GM12878 (cell line): ENCODE measurements at regions of chr2 and their contacts with region 1.

Region 1: DNA sequence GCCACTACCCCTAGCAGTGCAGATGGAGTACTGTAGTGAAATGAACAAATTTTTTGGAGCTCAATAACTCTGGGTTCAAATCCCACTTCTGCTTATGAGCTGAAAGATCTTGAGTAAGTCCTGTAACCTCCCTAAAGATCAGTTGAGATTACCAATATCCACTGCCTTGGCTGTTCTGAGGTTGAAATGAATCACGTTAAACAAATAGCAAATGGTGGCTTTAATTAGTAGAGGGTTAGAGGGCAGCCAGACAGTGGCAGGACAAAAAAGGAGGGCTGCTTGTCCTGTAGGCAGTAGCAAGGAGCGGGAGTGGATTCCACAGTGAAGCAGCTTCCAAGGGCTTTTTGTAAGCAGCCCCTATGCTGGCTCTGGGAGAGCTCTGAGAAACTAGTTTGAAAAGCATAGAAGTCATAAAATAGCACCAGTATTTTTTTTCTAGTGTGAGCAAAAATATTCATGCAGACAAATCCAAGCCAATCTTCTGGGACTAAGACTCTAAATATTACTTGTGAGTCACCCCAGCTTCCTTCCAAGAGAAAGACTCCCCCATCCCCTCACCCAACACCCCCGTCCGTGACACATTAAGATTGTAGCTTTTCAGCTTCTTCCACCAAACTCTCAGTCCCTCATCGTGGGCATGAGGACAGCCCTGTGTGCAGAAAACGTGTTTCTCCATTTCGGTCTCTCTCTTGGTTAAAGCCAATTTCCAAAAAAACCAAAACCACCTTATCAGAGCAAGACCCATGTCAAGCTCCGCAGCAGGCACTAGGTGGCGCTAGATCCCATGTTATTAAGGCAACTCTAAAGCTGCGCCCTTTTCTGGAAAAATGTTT is 123.5 kb upstream of the LGALSL start:
- DNase-seq: no peak
- ATAC-seq: peak; percentile 22
- H3K4me3 ChIP-seq: no peak overlapping the region
- H3K27ac ChIP-seq: no peak overlapping the region
- H3K4me1 ChIP-seq: peaks cover 41% of the 10 kb centered on the region
- H3K27me3 ChIP-seq: no peaks in the 10 kb centered on the region
- CTCF ChIP-seq: peak; percentile 82 to 92 (median 91)
- EP300 ChIP-seq: no peak
- POLR2A ChIP-seq: no peak
- RAD21 ChIP-seq: peak; percentile 97

Region 2: GRCh38 chr2:64062829-64063228 is 267.7 kb before region 1 on chr2:
- CTCF ChIA-PET with region 1: interaction called, 420 read pairs
- POLR2A ChIA-PET with region 1: interaction called, 5 read pairs
- RAD21 ChIA-PET with region 1: interaction called, 13 read pairs
- SMC1A ChIA-PET with region 1: interaction called, 22 read pairs
- in situ Hi-C with region 1: no loop called
- intact Hi-C with region 1: no loop called
- DNase-seq: peak; percentile 31
- ATAC-seq: peak; percentile 71
- H3K4me3 ChIP-seq: no peak overlapping the region
- H3K27ac ChIP-seq: peak overlapping the region; percentile 56
- H3K4me1 ChIP-seq: peaks cover 24% of the 10 kb centered on the region; the same call in 1 of the 2 replicates
- H3K27me3 ChIP-seq: no peaks in the 10 kb centered on the region
- CTCF ChIP-seq: no peak
- EP300 ChIP-seq: no peak
- POLR2A ChIP-seq: no peak
- RAD21 ChIP-seq: no peak

Region 3: GRCh38 chr2:64157792-64158191 is 172.7 kb before region 1 on chr2:
- CTCF ChIA-PET with region 1: no interaction called
- POLR2A ChIA-PET with region 1: no interaction called
- RAD21 ChIA-PET with region 1: no interaction called
- SMC1A ChIA-PET with region 1: interaction called, 11 read pairs
- in situ Hi-C with region 1: no loop called
- intact Hi-C with region 1: no loop called
- DNase-seq: no peak
- ATAC-seq: no peak
- H3K4me3 ChIP-seq: no peak overlapping the region
- H3K27ac ChIP-seq: no peak overlapping the region
- H3K4me1 ChIP-seq: no peaks in the 10 kb centered on the region
- H3K27me3 ChIP-seq: no peaks in the 10 kb centered on the region
- CTCF ChIP-seq: no peak
- EP300 ChIP-seq: no peak
- POLR2A ChIP-seq: no peak
- RAD21 ChIP-seq: no peak

Region 4: DNA sequence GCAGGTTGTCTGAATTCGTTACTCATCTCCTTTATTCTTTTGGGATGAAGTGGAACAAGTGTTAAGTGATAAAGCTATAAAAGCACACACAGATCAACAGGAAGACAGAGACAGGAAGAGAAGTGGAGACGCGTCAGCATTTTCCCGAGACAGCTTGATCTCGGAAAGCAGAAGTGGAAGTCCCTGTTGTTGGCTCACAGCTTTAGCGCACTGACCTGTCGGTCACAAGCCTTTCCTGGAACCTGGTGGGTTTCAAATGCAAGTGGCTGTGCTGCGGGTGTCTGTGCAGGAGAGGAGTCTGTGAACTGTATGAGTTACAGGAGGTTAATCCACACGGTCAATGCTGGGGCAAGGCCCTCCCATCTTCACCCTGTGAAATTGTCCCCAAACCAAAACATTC is 69.7 kb before region 1 on chr2:
- CTCF ChIA-PET with region 1: interaction called, 8 read pairs
- POLR2A ChIA-PET with region 1: no interaction called
- RAD21 ChIA-PET with region 1: interaction called, 7 read pairs
- SMC1A ChIA-PET with region 1: interaction called, 11 read pairs
- in situ Hi-C with region 1: no loop called
- intact Hi-C with region 1: loop called (anchors 5 kb)
- DNase-seq: peak; percentile 75
- ATAC-seq: peak; percentile 99
- H3K4me3 ChIP-seq: peak overlapping the region; percentile 31; the same call in 1 of the 2 replicates
- H3K27ac ChIP-seq: peak overlapping the region; percentile 75
- H3K4me1 ChIP-seq: peaks cover 10% of the 10 kb centered on the region
- H3K27me3 ChIP-seq: no peaks in the 10 kb centered on the region
- CTCF ChIP-seq: no peak
- EP300 ChIP-seq: peak; percentile 35 to 77; a peak in 3 of 4 replicates
- POLR2A ChIP-seq: no peak
- RAD21 ChIP-seq: no peak

Region 5: DNA sequence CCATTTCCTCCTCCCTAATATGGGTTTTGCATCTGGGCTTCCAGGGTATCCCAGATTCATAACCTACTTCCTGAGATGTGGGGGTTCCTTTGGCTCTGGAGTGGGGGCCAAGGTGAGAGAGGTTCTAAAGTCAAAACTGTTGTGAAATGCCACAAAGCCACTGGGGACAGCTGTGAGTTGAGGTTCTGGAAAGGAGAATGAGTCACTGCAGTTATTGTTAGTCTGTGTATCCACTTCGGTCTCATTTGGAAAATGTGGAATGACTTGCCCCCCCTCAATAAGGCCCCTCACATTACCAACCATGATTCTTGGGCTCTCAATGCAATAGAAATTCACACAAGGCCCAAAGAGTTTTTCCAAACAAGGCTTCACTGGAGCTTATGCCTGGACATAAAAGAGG is 72.4 kb after region 1 on chr2:
- CTCF ChIA-PET with region 1: interaction called, 15 read pairs
- POLR2A ChIA-PET with region 1: no interaction called
- RAD21 ChIA-PET with region 1: interaction called, 6 read pairs
- SMC1A ChIA-PET with region 1: interaction called, 3 read pairs
- in situ Hi-C with region 1: no loop called
- intact Hi-C with region 1: no loop called
- DNase-seq: no peak
- ATAC-seq: no peak
- H3K4me3 ChIP-seq: no peak overlapping the region
- H3K27ac ChIP-seq: no peak overlapping the region
- H3K4me1 ChIP-seq: peaks cover 9% of the 10 kb centered on the region; the same call in 1 of the 2 replicates
- H3K27me3 ChIP-seq: no peaks in the 10 kb centered on the region
- CTCF ChIP-seq: no peak
- EP300 ChIP-seq: no peak
- POLR2A ChIP-seq: no peak
- RAD21 ChIP-seq: no peak

Region 6: DNA sequence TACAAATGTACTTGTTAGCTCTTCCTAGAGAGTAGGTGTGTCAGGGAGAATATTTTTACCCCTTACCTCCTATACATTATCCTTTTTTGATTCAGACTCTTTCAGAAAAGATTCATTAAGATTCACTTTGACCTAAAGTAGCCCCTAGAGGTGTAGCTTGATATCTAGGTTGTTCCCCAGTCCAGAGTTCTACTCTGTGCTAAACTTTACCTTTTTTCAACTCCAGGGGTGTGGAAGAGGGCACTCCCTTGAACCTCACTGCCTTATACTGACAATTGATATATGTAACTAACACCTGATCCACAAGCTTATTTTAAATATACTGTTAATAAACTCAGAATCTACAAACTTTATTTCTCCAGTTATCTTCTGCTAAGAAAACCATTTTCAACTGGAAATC is 223.6 kb after region 1 on chr2:
- CTCF ChIA-PET with region 1: interaction called, 11 read pairs
- POLR2A ChIA-PET with region 1: no interaction called
- RAD21 ChIA-PET with region 1: interaction called, 5 read pairs
- SMC1A ChIA-PET with region 1: interaction called, 48 read pairs
- in situ Hi-C with region 1: no loop called
- intact Hi-C with region 1: no loop called
- DNase-seq: no peak
- ATAC-seq: peak; percentile 61
- H3K4me3 ChIP-seq: no peak overlapping the region
- H3K27ac ChIP-seq: no peak overlapping the region
- H3K4me1 ChIP-seq: peaks cover 5% of the 10 kb centered on the region
- H3K27me3 ChIP-seq: no peaks in the 10 kb centered on the region
- CTCF ChIP-seq: no peak
- EP300 ChIP-seq: no peak
- POLR2A ChIP-seq: no peak
- RAD21 ChIP-seq: no peak

Region 7: GRCh38 chr2:64865073-64865830 is 534.8 kb after region 1 on chr2:
- CTCF ChIA-PET with region 1: interaction called, 17 read pairs
- POLR2A ChIA-PET with region 1: no interaction called
- RAD21 ChIA-PET with region 1: interaction called, 7 read pairs
- SMC1A ChIA-PET with region 1: interaction called, 11 read pairs
- in situ Hi-C with region 1: loop called (anchors 5 kb)
- intact Hi-C with region 1: loop called (anchors 2 kb)
- DNase-seq: no peak
- ATAC-seq: peak; percentile 84
- H3K4me3 ChIP-seq: peak overlapping the region; percentile 82
- H3K27ac ChIP-seq: peak overlapping the region; percentile 70
- H3K4me1 ChIP-seq: peaks cover 49% of the 10 kb centered on the region
- H3K27me3 ChIP-seq: no peaks in the 10 kb centered on the region
- CTCF ChIP-seq: peak; percentile 62 to 79 (median 64); a peak in 5 of 6 replicates
- EP300 ChIP-seq: no peak
- POLR2A ChIP-seq: no peak
- RAD21 ChIP-seq: peak; percentile 71